Activated CD4-positive, alpha-beta memory T cell treated with anti-CD3 and anti-CD28 coated beads, Interleukin-2, amount 10 ng/mL, durations not matched to agents 7 days and 5 days (primary cell): ENCODE measurements at regions of chr6 and their contacts with region 1.

Region 1: DNA sequence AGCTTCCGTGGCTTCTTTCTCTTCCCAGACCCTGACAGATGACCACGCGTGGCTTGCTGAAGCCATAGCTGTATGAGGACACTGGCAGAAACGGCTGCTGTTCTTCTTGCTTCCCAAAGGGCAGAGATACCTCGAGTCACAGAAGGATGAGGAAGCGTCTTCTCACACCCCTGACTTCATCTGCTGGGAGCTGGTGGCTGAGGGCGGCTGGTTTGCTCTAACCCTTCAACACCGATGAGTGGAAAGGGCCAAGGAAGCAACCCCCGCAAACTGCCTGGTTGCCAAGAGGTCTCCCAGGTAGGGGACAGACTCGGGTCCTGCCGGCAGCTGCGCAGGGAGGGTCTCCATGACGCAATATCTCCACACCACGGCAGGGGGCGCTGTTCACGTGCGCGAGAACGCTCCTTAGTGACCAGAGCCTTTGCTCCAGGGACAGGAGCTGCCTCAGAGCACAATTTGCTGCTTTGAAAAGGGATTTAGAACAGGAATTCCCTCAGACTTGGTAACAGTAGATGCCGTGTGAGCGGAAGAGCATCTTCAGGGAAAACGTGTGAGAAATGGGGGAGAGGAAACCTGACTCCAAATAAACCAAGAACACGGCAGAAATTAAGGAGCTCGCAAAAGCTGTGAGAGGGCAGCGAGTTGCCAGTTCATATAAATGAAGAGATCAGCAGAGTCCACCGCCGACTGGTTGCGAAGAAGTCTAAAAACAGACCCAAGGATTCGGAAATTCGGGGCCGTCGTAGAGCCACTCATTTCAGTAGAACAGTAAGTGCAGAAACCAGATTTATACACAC is 80.2 kb downstream of the ERMARD start:
- DNase-seq: peak; percentile 67
- H3K4me3 Mint-ChIP-seq: no peak overlapping the region
- H3K27ac Mint-ChIP-seq: no peak overlapping the region
- H3K4me1 Mint-ChIP-seq: no peaks in the 10 kb centered on the region
- H3K27me3 Mint-ChIP-seq: peaks cover 41% of the 10 kb centered on the region

Region 2: DNA sequence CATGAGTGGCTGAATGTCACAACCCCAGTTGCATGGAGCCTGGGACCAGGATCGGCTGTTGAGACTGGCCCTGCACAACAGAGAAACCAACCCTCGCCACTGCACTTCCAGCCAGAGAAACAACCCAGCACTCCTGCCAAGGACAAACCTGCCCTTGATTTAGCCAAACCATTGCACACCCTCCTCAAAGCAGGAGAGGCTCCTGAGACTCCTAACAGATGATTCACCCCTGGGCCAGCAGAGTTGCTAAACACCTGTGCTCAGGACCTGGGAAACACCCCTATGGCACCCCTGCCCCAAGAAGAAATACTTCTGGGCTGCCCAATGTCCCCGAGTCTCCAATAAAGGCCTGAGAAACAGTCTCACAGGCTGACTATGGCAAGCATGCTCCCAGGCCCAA is 147.6 kb before region 1 on chr6:
- CTCF ChIA-PET with region 1: no interaction called
- POLR2A ChIA-PET with region 1: no interaction called
- DNase-seq: no peak
- H3K4me3 Mint-ChIP-seq: no peak overlapping the region
- H3K27ac Mint-ChIP-seq: no peak overlapping the region
- H3K4me1 Mint-ChIP-seq: no peaks in the 10 kb centered on the region
- H3K27me3 Mint-ChIP-seq: no peaks in the 10 kb centered on the region

Region 3: DNA sequence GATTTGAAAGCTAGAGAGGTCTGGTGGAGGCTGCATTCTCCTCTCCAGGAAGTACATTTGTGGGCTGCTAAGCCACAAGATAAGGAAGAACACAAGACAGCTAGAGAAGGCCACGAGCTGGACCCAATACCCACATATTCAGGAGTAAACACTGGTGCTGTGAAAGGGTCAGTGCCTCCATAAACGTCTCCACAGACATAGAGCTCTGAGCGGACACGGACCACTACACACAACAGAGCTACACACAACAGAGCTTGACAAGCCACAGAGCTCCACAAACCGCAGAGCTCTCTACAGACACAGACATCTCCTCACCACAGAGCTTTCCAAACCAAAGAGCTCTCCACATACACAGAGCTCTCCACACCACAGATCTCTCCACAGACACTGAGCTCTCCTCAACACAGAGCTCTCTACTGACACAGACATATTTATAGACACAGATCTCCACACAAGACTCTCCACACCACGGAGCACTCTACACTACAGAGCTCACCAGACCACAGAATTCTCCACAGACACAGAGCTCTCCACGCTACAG is 28.3 kb before region 1 on chr6:
- CTCF ChIA-PET with region 1: interaction called, 11 read pairs
- POLR2A ChIA-PET with region 1: no interaction called
- DNase-seq: peak; percentile 29
- H3K4me3 Mint-ChIP-seq: no peak overlapping the region
- H3K27ac Mint-ChIP-seq: no peak overlapping the region
- H3K4me1 Mint-ChIP-seq: peaks cover 42% of the 10 kb centered on the region
- H3K27me3 Mint-ChIP-seq: peaks cover 50% of the 10 kb centered on the region

Region 4: DNA sequence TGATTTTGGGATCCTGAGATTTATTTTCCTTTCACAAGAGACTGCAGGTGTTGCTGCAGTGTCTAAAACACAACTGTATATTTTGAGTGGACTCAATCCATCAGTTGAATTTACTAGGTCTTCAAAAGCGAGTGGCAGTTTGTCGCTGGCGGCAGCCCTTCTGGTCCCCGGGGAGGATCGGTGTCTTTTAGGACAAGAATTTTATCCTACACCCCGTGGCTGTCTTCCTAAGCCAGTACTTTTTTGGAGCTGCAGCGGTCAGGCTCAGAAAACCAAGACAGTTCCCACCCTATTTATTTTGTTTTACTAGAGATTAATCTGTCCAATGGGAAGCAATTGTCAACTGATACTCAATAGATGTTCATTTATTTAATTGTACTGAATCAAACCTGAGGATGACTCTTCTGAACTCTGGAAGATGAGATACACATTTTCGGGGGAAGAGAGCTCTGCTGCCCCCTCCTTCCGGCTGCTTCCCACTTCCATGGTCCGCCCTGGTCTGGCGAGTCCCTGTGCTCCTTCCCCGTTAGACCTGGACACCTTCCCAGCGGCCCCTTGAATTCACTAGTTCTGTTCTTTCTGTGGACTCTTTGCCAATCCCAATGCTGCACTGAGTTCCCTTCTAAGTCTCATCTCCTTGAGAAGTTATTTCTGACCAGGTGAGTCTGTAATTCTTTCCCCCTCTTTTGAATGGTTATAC is 10.4 kb after region 1 on chr6:
- CTCF ChIA-PET with region 1: interaction called, 12 read pairs
- POLR2A ChIA-PET with region 1: no interaction called
- DNase-seq: peak; percentile 1
- H3K4me3 Mint-ChIP-seq: no peak overlapping the region
- H3K27ac Mint-ChIP-seq: no peak overlapping the region
- H3K4me1 Mint-ChIP-seq: no peaks in the 10 kb centered on the region
- H3K27me3 Mint-ChIP-seq: peaks cover 4% of the 10 kb centered on the region

Region 5: DNA sequence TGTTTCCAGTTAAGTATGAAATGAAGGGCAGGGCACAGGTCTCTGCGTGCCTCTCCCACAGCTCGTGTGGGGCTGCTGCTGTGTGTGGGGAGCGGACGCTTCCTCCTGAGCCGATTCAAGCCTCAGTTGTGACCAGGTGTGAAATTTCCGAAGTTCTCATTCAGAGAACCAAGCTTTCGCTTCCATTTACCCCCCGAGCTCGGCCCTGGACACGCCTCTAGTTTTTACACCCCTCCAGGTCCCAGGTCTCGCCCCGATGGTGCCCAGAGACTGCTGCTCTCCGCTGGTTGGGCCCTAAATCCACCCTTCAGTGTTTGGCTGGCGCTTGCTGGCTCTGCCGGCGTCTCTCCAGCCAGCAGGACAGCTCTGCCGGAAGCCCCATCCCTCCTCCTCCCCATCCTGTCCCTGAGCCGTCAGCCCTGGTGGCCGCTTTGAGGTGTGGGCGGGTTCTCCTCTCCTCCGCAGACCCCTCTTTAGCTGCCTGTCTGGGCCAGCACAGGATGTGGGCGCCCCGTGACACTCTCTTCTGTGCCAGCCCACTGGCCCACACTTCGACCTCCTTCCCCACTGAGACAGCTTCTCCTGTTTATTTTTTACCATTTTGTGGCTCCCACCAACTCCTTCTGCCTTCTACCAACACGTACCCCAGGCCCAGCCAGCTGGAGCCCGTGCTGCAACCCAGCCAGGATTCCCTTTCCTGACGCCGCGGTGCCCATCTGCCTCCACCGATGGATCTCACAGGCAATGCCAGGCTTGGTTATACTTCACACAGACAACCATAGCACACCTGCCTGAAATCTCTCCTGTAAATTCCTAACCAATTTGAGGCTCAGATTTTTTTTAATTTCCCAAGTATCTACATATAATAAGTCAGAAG is 316.4 kb after region 1 on chr6:
- CTCF ChIA-PET with region 1: no interaction called
- POLR2A ChIA-PET with region 1: no interaction called
- DNase-seq: peak; percentile 73
- H3K4me3 Mint-ChIP-seq: peak overlapping the region; percentile 64
- H3K27ac Mint-ChIP-seq: peak overlapping the region; percentile 89
- H3K4me1 Mint-ChIP-seq: peaks cover 35% of the 10 kb centered on the region
- H3K27me3 Mint-ChIP-seq: peaks cover 18% of the 10 kb centered on the region

Region 6: DNA sequence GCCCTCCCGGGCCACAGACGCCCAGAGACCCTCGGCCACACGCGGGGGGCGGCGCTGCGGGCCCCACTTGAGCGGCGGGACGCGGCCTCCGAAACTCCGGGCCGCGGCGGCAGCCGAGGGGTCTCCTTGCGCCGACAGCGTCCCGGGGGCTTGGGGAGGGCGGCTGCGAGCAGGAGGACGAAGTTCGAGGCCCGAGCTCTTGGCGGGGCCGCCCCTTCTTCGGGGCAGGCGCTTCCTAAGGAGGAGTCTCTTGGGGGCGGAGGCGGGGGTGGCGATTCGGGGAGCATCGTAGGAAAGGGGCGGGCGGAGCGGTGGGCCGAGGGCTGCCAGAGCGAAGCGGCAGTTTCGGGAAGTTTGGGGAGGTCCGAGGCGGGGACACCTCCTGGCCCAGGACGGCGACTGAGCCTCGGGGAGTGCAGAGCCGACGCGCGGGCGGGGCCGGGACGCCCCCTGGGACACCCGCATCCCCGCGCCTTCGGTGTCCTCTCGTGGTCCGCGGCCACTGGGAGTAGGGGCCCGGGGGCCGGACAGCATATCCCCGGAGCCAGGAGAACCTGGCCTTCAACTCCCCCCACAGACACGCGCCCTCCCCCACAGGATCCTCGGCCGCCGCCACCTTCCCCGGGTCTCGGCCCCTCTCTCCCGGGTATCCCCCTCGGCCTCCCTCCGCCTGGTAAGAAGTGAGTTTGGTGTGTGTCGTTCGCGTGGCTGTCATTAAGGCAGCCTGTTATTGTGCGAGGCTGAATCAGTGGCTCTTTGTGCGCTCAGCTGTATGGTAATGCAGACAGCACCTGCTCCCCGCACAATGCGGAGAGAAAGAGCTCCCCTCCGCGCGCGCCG is 459.8 kb after region 1 on chr6:
- CTCF ChIA-PET with region 1: interaction called, 11 read pairs
- POLR2A ChIA-PET with region 1: no interaction called
- DNase-seq: peak; percentile 29
- H3K4me3 Mint-ChIP-seq: peak overlapping the region; percentile 66
- H3K27ac Mint-ChIP-seq: no peak overlapping the region
- H3K4me1 Mint-ChIP-seq: peaks cover 42% of the 10 kb centered on the region
- H3K27me3 Mint-ChIP-seq: peaks cover 72% of the 10 kb centered on the region

Region 7: GRCh38 chr6:170516783-170517616 is 685.4 kb after region 1 on chr6:
- CTCF ChIA-PET with region 1: interaction called, 21 read pairs
- POLR2A ChIA-PET with region 1: no interaction called
- DNase-seq: peak; percentile 37
- H3K4me3 Mint-ChIP-seq: no peak overlapping the region
- H3K27ac Mint-ChIP-seq: no peak overlapping the region
- H3K4me1 Mint-ChIP-seq: peaks cover 7% of the 10 kb centered on the region
- H3K27me3 Mint-ChIP-seq: peaks cover 60% of the 10 kb centered on the region